ENCODE measurements at regions of chr18 and their contacts with region 1.

Region 1: GRCh38 chr18:59823596-59824195 is 76.1 kb upstream of the PMAIP1 start:
- DNase-seq: no peak

Region 2: DNA sequence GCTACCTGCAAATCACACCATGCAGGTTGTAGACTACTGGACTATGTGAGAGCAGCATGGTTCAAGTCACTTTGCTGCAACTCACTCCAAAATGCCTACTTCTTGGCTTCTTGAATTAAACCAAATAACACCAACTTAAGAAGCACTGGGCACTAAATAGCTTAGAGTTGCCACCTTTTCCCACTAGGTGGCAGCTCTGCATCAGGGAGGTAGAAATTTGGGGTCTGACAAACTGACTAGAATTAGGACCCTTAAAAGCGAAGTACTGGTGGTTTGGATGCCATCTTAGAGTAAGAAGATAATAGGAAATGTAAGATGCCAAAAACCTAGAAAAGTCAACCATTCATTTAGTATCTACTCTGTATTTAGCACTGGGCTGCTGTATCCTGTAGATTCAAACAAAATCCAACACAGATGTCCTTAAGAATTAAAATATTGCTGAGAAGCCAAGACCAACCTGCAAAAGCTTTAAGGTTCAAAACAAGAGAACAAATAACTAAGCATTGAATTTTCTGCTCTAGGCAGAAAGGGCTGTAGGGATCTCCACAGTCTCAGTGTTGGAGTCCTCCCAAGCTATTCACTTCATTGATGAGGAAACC is 192.0 kb before region 1 on chr18:
- intact Hi-C with region 1: loop called (anchors 2 kb)
- DNase-seq: no peak